GM10248 (cell line): ENCODE measurements at regions of chr3 and their contacts with region 1.

Region 1: DNA sequence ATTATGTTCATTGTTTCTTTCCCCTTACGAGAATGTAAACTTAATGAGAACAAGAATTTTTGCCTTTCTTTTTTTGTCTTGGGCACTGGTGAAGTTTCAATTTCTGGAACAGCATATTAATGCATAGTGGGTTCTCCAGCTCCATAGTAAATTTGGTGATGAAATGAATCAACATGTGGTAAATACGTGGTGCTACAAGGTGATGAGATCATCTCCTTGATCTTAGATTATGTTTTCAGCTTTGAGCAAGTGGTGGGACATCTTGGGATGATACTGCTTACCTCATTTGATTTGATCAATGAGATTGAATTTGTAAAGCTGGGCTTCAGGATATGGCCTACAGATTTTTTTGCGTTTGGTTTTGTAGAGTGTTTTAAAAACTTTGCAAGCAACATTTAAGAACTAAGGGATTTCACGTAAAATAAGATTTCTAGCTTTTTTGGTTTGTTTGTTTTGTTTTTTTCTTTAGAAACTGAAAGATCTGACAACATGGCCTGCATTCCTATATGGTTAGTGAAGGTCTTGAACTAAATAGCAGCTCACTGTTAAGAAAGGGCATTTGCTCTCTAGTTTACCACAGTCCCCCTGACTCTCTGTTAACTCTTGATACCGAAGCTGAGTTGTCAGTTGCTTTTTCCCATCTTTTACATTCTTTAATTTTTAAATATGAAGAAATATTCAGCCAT is 45.6 kb downstream of the FNDC3B start:
- DNase-seq: no peak
- CTCF ChIP-seq: no peak

Region 2: DNA sequence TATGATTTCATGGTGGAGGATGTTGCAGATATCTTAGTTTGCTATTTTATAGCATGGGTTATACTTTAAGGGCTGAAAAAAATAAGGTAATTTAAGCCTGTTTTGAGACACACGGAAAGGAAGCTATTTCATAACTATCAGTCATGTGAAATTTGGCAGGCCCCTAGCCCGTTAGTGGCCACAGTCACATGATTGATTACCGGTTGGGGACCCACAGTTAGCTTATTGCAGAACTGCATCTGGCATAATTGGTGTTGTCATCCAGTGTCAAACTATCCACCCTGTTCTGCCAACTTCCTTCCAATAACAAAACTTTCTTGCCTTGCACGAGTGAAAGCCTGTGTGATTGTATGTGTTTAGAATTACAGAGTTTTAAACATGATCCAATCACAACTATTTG is 10.4 kb before region 1 on chr3:
- CTCF ChIA-PET with region 1: interaction called, 11 read pairs
- POLR2A ChIA-PET with region 1: no interaction called
- DNase-seq: no peak
- CTCF ChIP-seq: no peak